ENCODE measurements at regions of chrX and their contacts with region 1.

Region 1: GRCh38 chrX:103845165-103845653 is 13.2 kb upstream of the RAB9B start:
- DNase-seq: peak; percentile 64
- H3K4me3 ChIP-seq: no peak overlapping the region
- H3K27ac ChIP-seq: no peak overlapping the region
- H3K4me1 ChIP-seq: no peaks in the 10 kb centered on the region
- H3K27me3 ChIP-seq: no peaks in the 10 kb centered on the region
- CTCF ChIP-seq: peak; percentile 80

Region 2: GRCh38 chrX:103756736-103757135 is 88.5 kb before region 1 on chrX:
- CTCF ChIA-PET with region 1: no interaction called
- POLR2A ChIA-PET with region 1: no interaction called
- intact Hi-C with region 1: no loop called
- DNase-seq: no peak
- H3K4me3 ChIP-seq: no peak overlapping the region
- H3K27ac ChIP-seq: no peak overlapping the region
- H3K4me1 ChIP-seq: no peaks in the 10 kb centered on the region
- H3K27me3 ChIP-seq: peaks cover 4% of the 10 kb centered on the region
- CTCF ChIP-seq: no peak

Region 3: GRCh38 chrX:104013158-104013557 is 167.9 kb after region 1 on chrX:
- CTCF ChIA-PET with region 1: no interaction called
- POLR2A ChIA-PET with region 1: no interaction called
- intact Hi-C with region 1: loop called (anchors 5 kb)
- DNase-seq: no peak
- H3K4me3 ChIP-seq: no peak overlapping the region
- H3K27ac ChIP-seq: no peak overlapping the region
- H3K4me1 ChIP-seq: no peaks in the 10 kb centered on the region
- H3K27me3 ChIP-seq: no peaks in the 10 kb centered on the region
- CTCF ChIP-seq: no peak

Region 4: GRCh38 chrX:104136241-104137019 is 291.2 kb after region 1 on chrX:
- CTCF ChIA-PET with region 1: no interaction called
- POLR2A ChIA-PET with region 1: no interaction called
- intact Hi-C with region 1: loop called (anchors 2 kb)
- DNase-seq: peak; percentile 85
- H3K4me3 ChIP-seq: no peak overlapping the region
- H3K27ac ChIP-seq: no peak overlapping the region
- H3K4me1 ChIP-seq: no peaks in the 10 kb centered on the region
- H3K27me3 ChIP-seq: peaks cover 4% of the 10 kb centered on the region
- CTCF ChIP-seq: peak; percentile 76